Activated CD4-positive, alpha-beta memory T cell treated with anti-CD3 and anti-CD28 coated beads for 36 hours (primary cell): ENCODE measurements at regions of chrX and their contacts with region 1.

Region 1: DNA sequence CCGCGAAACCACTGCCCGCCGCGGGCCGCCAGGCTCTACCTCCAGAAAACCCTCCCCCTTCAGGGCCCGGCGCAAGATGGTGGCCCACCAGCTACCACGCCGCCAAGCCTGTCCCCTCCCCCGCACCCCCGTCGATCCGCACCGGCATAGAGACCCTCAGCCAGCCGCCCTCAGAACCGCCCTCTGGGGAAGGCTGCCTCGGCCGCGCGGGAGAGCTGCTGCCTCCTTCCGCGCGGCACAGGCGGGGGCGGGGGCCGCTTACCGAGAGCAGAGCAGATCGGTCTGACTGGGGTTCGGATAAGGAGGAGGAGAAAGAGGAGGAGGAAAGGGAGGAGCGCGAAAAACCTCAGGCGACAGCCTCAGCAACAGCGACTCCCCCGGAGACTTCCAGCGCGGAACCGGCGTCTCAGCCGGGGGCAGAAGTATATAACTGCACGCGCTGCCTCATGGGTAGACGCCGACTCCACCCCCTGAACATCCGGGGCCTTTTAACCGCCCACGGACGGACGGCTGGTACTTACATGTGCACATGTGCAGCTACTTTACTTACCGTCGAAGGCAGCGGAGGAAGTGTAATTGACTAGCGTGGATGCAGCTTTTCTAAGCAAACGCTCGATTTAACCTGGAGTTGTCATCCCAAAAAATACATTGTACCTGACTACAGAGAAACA is at the start of gene ZNF280C:
- DNase-seq: peak; percentile 95
- H3K4me3 Mint-ChIP-seq: peak within 1 kb of the TSS; percentile 85
- H3K27ac Mint-ChIP-seq: peak within 1 kb of the TSS; percentile 74
- H3K4me1 Mint-ChIP-seq: peaks cover 15% of the 10 kb centered on the region
- H3K27me3 Mint-ChIP-seq: no peaks in the 10 kb centered on the region
- total RNA-seq, gene ZNF280C: 5.3 to 5.8 TPM

Region 2: GRCh38 chrX:129706400-129707072 is 562.1 kb before region 1 on chrX:
- CTCF ChIA-PET with region 1: no interaction called
- POLR2A ChIA-PET with region 1: no interaction called
- intact Hi-C with region 1: no loop called
- DNase-seq: no peak
- H3K4me3 Mint-ChIP-seq: no peak overlapping the region
- H3K27ac Mint-ChIP-seq: no peak overlapping the region
- H3K4me1 Mint-ChIP-seq: no peaks in the 10 kb centered on the region
- H3K27me3 Mint-ChIP-seq: no peaks in the 10 kb centered on the region

Region 3: DNA sequence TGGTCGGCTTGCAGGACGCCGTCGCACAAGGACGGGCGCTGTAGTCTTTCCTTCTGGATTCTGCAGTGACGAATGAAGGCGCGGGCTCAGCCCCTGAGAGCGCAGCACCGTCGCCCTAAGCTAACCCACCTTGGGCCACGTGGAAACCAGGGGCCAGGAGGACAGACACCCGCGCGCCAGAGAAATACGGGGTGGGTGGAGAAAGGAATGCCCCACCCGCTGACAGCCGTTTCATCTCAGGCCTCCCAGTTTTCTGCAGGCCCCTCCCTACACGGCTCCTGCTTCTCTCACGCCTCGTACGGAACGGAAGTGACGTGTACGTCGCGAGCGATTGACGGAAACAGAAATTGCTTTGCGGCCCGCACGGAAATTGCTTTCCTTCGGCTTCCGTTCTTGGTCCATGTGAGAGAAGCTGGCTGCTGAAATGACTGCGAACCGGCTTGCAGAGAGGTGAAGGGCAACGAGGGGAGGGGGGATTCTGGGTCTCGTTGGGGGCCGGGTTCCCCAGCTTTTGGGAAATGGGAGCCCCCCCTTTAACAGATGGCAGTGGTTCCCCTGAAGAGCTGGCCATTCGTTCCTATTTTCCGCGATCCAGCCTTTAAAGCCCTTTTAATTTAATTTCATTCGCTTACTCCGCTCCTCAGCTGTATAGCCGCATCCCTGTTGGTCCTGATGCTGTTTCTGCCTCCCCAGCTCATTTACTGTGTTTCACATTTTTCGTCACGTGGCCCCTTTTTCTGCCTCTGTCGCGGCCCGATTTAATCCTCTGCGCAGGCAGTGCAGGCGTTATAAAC is 362.7 kb before region 1 on chrX and contains the start of gene UTP14A:
- CTCF ChIA-PET with region 1: no interaction called
- POLR2A ChIA-PET with region 1: no interaction called
- intact Hi-C with region 1: no loop called
- DNase-seq: peak; percentile 92
- H3K4me3 Mint-ChIP-seq: peak within 1 kb of the TSS; percentile 88
- H3K27ac Mint-ChIP-seq: peak within 1 kb of the TSS; percentile 88
- H3K4me1 Mint-ChIP-seq: peaks cover 23% of the 10 kb centered on the region
- H3K27me3 Mint-ChIP-seq: no peaks in the 10 kb centered on the region
- total RNA-seq, gene UTP14A: 29.9 to 31.7 TPM

Region 4: GRCh38 chrX:130165703-130166502 is 102.7 kb before region 1 on chrX and contains the start of gene AIFM1:
- CTCF ChIA-PET with region 1: no interaction called
- POLR2A ChIA-PET with region 1: no interaction called
- intact Hi-C with region 1: loop called (anchors 1 kb)
- DNase-seq: peak; percentile 93
- H3K4me3 Mint-ChIP-seq: peak within 1 kb of the TSS; percentile 84
- H3K27ac Mint-ChIP-seq: peak within 1 kb of the TSS; percentile 95
- H3K4me1 Mint-ChIP-seq: peaks cover 34% of the 10 kb centered on the region
- H3K27me3 Mint-ChIP-seq: no peaks in the 10 kb centered on the region
- total RNA-seq, gene AIFM1: 60.9 to 61.2 TPM

Region 5: DNA sequence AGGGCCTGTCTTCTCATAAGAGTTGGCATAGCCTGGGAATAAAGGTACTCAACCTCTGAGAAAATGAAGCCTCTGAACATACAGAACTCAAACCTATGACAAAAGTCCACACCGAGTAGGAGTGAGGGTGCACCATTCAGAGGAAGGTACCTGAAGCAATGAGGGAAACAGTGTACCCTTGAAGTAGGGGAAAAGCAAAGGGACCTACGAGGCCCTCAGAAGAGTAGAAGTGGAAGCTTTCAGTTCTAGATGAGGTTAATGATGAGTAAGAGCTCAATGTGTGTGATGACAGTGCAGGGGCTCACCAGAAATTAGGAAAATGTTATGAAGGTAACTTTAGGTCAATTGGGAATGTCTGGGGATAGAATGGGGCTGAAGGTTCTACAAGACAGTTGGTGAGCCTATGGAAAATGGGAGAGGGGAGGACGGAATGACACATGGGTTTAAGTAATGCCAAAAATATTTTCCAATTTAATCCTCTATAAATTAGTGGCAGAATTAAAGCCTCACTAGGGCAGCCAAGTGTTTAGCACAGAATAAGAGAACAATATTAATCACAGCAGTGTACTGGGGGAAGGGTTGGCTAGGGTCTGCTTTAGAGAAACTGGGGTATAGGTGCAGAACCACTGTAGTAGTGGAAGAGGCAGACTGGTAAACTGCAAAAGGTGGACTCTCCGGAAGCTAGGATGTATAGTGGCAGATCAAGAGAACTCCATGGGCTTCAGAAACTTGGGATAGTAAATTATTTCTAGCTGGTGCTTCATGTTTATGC is 57.0 kb before region 1 on chrX:
- CTCF ChIA-PET with region 1: no interaction called
- POLR2A ChIA-PET with region 1: interaction called, 7 read pairs
- intact Hi-C with region 1: loop called (anchors 1 kb)
- DNase-seq: peak; percentile 10
- H3K4me3 Mint-ChIP-seq: peak overlapping the region; percentile 24
- H3K27ac Mint-ChIP-seq: peak overlapping the region; percentile 97
- H3K4me1 Mint-ChIP-seq: peaks cover 27% of the 10 kb centered on the region
- H3K27me3 Mint-ChIP-seq: no peaks in the 10 kb centered on the region

Region 6: GRCh38 chrX:130401415-130402207 is 133.0 kb after region 1 on chrX and contains the start of gene RBMX2:
- CTCF ChIA-PET with region 1: no interaction called
- POLR2A ChIA-PET with region 1: no interaction called
- intact Hi-C with region 1: loop called (anchors 2 kb)
- DNase-seq: peak; percentile 76
- H3K4me3 Mint-ChIP-seq: peak within 1 kb of the TSS; percentile 83
- H3K27ac Mint-ChIP-seq: peak within 1 kb of the TSS; percentile 87
- H3K4me1 Mint-ChIP-seq: peaks cover 26% of the 10 kb centered on the region
- H3K27me3 Mint-ChIP-seq: peaks cover 6% of the 10 kb centered on the region
- total RNA-seq, gene RBMX2: 28.4 to 29.8 TPM

Region 7: DNA sequence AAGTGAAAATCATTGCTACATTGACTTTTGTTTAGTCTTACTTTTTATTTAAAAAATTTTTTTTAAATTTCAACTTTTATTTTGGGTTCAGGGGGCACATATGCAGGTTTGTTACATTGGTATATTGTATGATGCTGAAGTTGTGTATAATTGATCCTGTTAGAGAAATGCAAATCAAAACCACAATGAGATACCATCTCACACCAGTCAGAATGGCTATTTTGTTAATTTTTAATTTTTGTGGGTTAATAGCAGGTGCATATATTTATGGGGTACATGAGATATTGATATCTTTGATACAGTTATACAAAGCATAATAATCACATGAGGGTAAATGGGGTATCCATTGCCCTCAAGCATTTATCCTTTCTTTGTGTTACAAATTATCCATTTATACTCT is 167.3 kb after region 1 on chrX:
- CTCF ChIA-PET with region 1: no interaction called
- POLR2A ChIA-PET with region 1: no interaction called
- intact Hi-C with region 1: no loop called
- DNase-seq: no peak
- H3K4me3 Mint-ChIP-seq: no peak overlapping the region
- H3K27ac Mint-ChIP-seq: no peak overlapping the region
- H3K4me1 Mint-ChIP-seq: no peaks in the 10 kb centered on the region
- H3K27me3 Mint-ChIP-seq: no peaks in the 10 kb centered on the region